Activated CD4-positive, alpha-beta T cell treated with anti-CD3 and anti-CD28 coated beads for 36 hours (primary cell): ENCODE measurements at regions of chr15 and their contacts with region 1.

Region 1: GRCh38 chr15:90660195-90660998 is 56.7 kb upstream of the BLM start:
- DNase-seq: peak; percentile 89
- ATAC-seq: peak; percentile 96
- H3K4me3 Mint-ChIP-seq: peak overlapping the region; percentile 52
- H3K27ac Mint-ChIP-seq: peak overlapping the region; percentile 43
- H3K4me1 Mint-ChIP-seq: peaks cover 73% of the 10 kb centered on the region
- H3K27me3 Mint-ChIP-seq: peaks cover 47% of the 10 kb centered on the region

Region 2: GRCh38 chr15:89575146-89575655 is 1085.2 kb before region 1 on chr15 and contains the start of gene TICRR:
- CTCF ChIA-PET with region 1: no interaction called
- POLR2A ChIA-PET with region 1: no interaction called
- intact Hi-C with region 1: no loop called
- DNase-seq: peak; percentile 96
- ATAC-seq: peak; percentile 99
- H3K4me3 Mint-ChIP-seq: peak within 1 kb of the TSS; percentile 89
- H3K27ac Mint-ChIP-seq: peak within 1 kb of the TSS; percentile 72
- H3K4me1 Mint-ChIP-seq: peaks cover 26% of the 10 kb centered on the region
- H3K27me3 Mint-ChIP-seq: peaks cover 5% of the 10 kb centered on the region
- total RNA-seq, gene TICRR: 25.7 to 28.9 TPM

Region 3: DNA sequence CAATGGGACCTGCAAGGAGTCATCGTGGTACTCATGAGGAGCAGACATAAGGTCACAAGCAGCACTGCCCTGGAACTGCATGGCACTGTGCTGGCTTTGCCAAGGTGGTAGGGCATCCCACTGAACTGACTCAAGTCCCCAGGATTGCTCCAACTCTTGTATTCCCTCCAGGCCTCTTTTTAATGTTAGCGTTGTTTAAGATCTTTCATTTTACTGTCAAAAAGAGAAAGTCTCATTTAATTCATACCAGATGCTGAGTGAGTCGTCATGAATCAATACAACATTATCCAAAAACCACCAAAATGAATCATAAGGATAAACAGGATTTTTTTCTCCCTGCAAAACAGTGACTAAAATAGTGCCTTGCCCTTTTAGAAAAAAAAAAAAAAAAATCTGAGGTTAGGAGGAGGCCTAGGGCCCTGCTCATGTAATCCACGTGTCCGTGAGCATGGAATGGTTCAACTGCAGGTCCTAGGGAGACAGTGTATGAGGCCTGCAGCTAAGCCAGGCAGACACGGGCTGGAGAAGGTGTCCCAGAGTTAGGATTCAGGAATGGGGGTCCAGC is 20.1 kb after region 1 on chr15:
- CTCF ChIA-PET with region 1: interaction called, 7 read pairs
- POLR2A ChIA-PET with region 1: interaction called, 3 read pairs
- intact Hi-C with region 1: loop called (anchors 1 kb)
- DNase-seq: no peak
- ATAC-seq: peak; percentile 59
- H3K4me3 Mint-ChIP-seq: no peak overlapping the region
- H3K27ac Mint-ChIP-seq: no peak overlapping the region
- H3K4me1 Mint-ChIP-seq: peaks cover 46% of the 10 kb centered on the region
- H3K27me3 Mint-ChIP-seq: peaks cover 5% of the 10 kb centered on the region

Region 4: GRCh38 chr15:90686435-90687218 is 26.2 kb after region 1 on chr15:
- CTCF ChIA-PET with region 1: no interaction called
- POLR2A ChIA-PET with region 1: no interaction called
- intact Hi-C with region 1: loop called (anchors 1 to 2 kb)
- DNase-seq: peak; percentile 50
- ATAC-seq: peak; percentile 95
- H3K4me3 Mint-ChIP-seq: peak overlapping the region; percentile 11
- H3K27ac Mint-ChIP-seq: peak overlapping the region; percentile 90
- H3K4me1 Mint-ChIP-seq: peaks cover 31% of the 10 kb centered on the region
- H3K27me3 Mint-ChIP-seq: peaks cover 6% of the 10 kb centered on the region

Region 5: DNA sequence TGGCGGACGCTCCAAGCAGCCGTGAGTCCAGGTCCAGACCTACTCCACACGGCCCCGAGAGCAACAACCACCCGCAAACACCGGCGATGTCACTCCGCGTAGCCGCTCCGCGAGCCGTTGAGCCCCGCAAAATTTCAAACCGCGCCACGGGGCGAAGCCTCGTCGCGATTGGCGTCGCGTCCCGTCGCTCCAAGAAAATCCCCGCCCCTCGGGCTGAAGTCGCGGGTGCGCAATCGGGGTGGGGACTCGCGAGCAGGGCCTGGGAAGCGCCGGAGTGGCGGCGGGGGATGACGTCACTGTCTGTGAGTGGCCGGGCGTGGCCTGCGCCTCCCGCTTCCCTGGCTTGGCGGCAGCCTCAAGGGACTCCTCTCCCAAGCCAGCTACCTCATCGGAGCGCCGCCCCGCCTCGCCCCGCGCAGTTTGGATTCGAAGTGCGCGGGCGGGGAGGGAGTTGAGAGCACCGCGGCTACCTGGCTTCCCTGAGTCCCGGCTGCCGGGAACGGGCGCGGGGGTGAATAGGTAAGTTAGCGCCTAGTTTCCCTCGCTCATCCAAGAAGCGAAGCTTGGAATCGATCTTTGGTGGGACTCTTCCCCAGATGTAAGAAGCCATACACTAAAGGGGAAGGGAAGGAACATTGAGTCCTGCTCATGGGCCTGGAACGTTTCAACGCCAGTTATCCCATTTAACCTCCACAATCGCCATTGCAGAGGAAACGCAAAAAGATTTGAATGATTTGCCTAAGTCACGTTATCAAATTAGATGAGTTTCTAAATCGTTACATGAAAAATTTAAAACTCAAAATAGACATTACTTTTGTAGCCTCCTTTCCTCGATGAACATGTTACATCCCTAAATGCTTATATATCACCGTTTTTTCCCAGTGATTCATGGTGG is 334.3 kb after region 1 on chr15 and contains the start of gene PRC1:
- CTCF ChIA-PET with region 1: no interaction called
- POLR2A ChIA-PET with region 1: no interaction called
- intact Hi-C with region 1: loop called in 1 of 2 experiments (anchors 2 kb)
- DNase-seq: peak; percentile 99
- ATAC-seq: peak; percentile 99
- H3K4me3 Mint-ChIP-seq: peak within 1 kb of the TSS; percentile 99
- H3K27ac Mint-ChIP-seq: peak within 1 kb of the TSS; percentile 100
- H3K4me1 Mint-ChIP-seq: peaks cover 19% of the 10 kb centered on the region
- H3K27me3 Mint-ChIP-seq: no peaks in the 10 kb centered on the region
- total RNA-seq, gene PRC1: 111 to 157 TPM